CD4-positive, alpha-beta T cell (primary cell): ENCODE measurements at regions of chr20 and their contacts with region 1.

Region 1: GRCh38 chr20:53774461-53775203 is 181.0 kb upstream of the ZNF217 start:
- DNase-seq: no peak
- ATAC-seq: no peak
- H3K4me3 ChIP-seq: no peak overlapping the region
- H3K4me3 Mint-ChIP-seq: no peak overlapping the region
- H3K27ac ChIP-seq: no peak overlapping the region
- H3K27ac Mint-ChIP-seq: no peak overlapping the region
- H3K4me1 ChIP-seq: no peaks in the 10 kb centered on the region
- H3K4me1 Mint-ChIP-seq: no peaks in the 10 kb centered on the region
- H3K27me3 ChIP-seq: no peaks in the 10 kb centered on the region
- H3K27me3 Mint-ChIP-seq: no peaks in the 10 kb centered on the region
- CTCF ChIP-seq: no peak

Region 2: GRCh38 chr20:53809183-53809582 is 34.6 kb after region 1 on chr20:
- CTCF ChIA-PET with region 1: no interaction called
- POLR2A ChIA-PET with region 1: no interaction called
- intact Hi-C with region 1: no loop called
- DNase-seq: no peak
- ATAC-seq: no peak
- H3K4me3 ChIP-seq: no peak overlapping the region
- H3K4me3 Mint-ChIP-seq: no peak overlapping the region
- H3K27ac ChIP-seq: no peak overlapping the region
- H3K27ac Mint-ChIP-seq: no peak overlapping the region
- H3K4me1 ChIP-seq: no peaks in the 10 kb centered on the region
- H3K4me1 Mint-ChIP-seq: peaks cover 6% of the 10 kb centered on the region
- H3K27me3 ChIP-seq: no peaks in the 10 kb centered on the region
- H3K27me3 Mint-ChIP-seq: no peaks in the 10 kb centered on the region
- CTCF ChIP-seq: no peak

Region 3: DNA sequence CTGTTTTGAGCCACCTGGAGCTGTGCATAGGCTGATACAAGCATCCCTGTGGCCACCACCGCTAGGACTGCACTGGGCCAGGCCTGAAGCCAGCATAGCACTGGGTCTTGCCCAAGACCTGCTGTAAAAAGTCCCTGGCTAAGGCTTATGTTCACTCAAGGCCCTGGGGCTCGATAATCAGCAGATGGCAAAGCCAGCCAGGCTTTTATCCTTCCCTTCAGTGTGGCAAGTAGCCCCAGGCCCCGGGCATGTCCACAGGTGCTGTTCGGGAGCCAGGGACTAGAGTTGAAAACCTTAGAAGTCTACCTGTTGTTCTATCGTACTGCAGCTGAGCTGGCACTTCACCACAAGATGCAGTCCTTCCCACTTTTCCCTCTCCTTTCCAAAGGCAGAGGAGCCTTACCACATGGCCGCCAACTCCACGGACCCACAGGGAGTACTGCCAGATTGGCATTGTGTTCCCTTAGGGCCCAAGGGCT is 45.4 kb after region 1 on chr20:
- CTCF ChIA-PET with region 1: no interaction called
- POLR2A ChIA-PET with region 1: no interaction called
- intact Hi-C with region 1: loop called in 1 of 2 experiments (anchors 5 kb)
- DNase-seq: no peak
- ATAC-seq: no peak
- H3K4me3 ChIP-seq: no peak overlapping the region
- H3K4me3 Mint-ChIP-seq: no peak overlapping the region
- H3K27ac ChIP-seq: no peak overlapping the region
- H3K27ac Mint-ChIP-seq: no peak overlapping the region
- H3K4me1 ChIP-seq: no peaks in the 10 kb centered on the region
- H3K4me1 Mint-ChIP-seq: peaks cover 21% of the 10 kb centered on the region
- H3K27me3 ChIP-seq: no peaks in the 10 kb centered on the region
- H3K27me3 Mint-ChIP-seq: no peaks in the 10 kb centered on the region
- CTCF ChIP-seq: no peak